B cell (primary cell): ENCODE measurements at regions of chr2 and their contacts with region 1.

Region 1: GRCh38 chr2:161063157-161063954 is 96.9 kb upstream of the TANK start:
- DNase-seq: peak; percentile 77
- ATAC-seq: peak; percentile 89
- H3K4me3 ChIP-seq: no peak overlapping the region
- H3K4me3 Mint-ChIP-seq: no peak overlapping the region
- H3K27ac ChIP-seq: no peak overlapping the region
- H3K27ac Mint-ChIP-seq: no peak overlapping the region
- H3K4me1 ChIP-seq: peaks cover 0 to 3% of the 10 kb centered on the region in 2 donors
- H3K4me1 Mint-ChIP-seq: peaks cover 4% of the 10 kb centered on the region
- H3K27me3 ChIP-seq: no peaks in the 10 kb centered on the region
- H3K27me3 Mint-ChIP-seq: no peaks in the 10 kb centered on the region
- CTCF ChIP-seq: peak; percentile 97

Region 2: GRCh38 chr2:160252278-160252887 is 811.0 kb before region 1 on chr2:
- CTCF ChIA-PET with region 1: interaction called, 7 read pairs
- POLR2A ChIA-PET with region 1: no interaction called
- intact Hi-C with region 1: loop called (anchors 2 kb)
- DNase-seq: peak; percentile 38
- ATAC-seq: no peak
- H3K4me3 ChIP-seq: no peak overlapping the region
- H3K4me3 Mint-ChIP-seq: no peak overlapping the region
- H3K27ac ChIP-seq: no peak overlapping the region
- H3K27ac Mint-ChIP-seq: no peak overlapping the region
- H3K4me1 ChIP-seq: no peaks in the 10 kb centered on the region
- H3K4me1 Mint-ChIP-seq: peaks cover 2% of the 10 kb centered on the region
- H3K27me3 ChIP-seq: no peaks in the 10 kb centered on the region
- H3K27me3 Mint-ChIP-seq: peaks cover 5% of the 10 kb centered on the region
- CTCF ChIP-seq: peak; percentile 90

Region 3: GRCh38 chr2:161077367-161078210 is 14.2 kb after region 1 on chr2:
- CTCF ChIA-PET with region 1: interaction called, 37 read pairs
- POLR2A ChIA-PET with region 1: no interaction called
- intact Hi-C with region 1: no loop called
- DNase-seq: peak; percentile 64
- ATAC-seq: peak; percentile 70
- H3K4me3 ChIP-seq: no peak overlapping the region
- H3K4me3 Mint-ChIP-seq: peak overlapping the region; percentile 48
- H3K27ac ChIP-seq: no peak overlapping the region
- H3K27ac Mint-ChIP-seq: peak overlapping the region; percentile 68
- H3K4me1 ChIP-seq: peaks cover 15 to 18% of the 10 kb centered on the region in 2 donors
- H3K4me1 Mint-ChIP-seq: peaks cover 18% of the 10 kb centered on the region
- H3K27me3 ChIP-seq: no peaks in the 10 kb centered on the region
- H3K27me3 Mint-ChIP-seq: no peaks in the 10 kb centered on the region
- CTCF ChIP-seq: no peak

Region 4: DNA sequence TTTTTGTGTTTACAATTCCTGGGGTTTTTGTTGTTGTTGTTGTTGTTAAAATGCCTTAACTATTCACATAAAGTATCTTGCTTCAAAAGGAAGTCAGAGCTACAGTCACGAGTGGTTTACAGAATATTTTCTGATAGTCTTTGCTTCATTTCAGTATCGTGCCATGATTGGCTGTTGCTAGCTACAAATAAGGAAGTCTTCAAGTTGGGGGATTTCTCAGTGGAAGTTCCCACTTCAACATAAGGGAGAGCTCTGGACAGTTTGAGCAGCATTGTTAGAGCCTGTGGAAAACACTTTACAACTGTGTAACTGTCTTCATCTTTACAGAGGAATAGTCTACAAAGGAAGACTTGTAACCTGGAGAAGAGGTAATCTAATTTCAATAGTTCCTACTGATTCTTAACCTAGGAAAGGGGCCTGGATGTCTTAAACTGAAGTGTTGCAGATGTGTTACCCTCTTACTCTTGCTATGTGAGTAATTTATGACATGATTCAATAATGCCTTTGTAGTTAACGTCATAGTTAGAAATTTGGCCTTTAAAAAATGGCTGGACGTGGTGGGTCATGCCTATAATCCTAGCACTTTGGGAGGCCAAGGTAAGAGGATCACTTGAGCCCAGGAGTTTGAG is 73.5 kb after region 1 on chr2:
- CTCF ChIA-PET with region 1: interaction called, 22 read pairs
- POLR2A ChIA-PET with region 1: no interaction called
- intact Hi-C with region 1: loop called (anchors 2 kb)
- DNase-seq: peak; percentile 93
- ATAC-seq: peak; percentile 94
- H3K4me3 ChIP-seq: peak overlapping the region; percentile 62 to 94 (median 79)
- H3K4me3 Mint-ChIP-seq: peak overlapping the region; percentile 99
- H3K27ac ChIP-seq: peak overlapping the region; percentile 97 to 100
- H3K27ac Mint-ChIP-seq: peak overlapping the region; percentile 97
- H3K4me1 ChIP-seq: peaks cover 23 to 35% of the 10 kb centered on the region in 2 donors
- H3K4me1 Mint-ChIP-seq: peaks cover 53% of the 10 kb centered on the region
- H3K27me3 ChIP-seq: no peaks in the 10 kb centered on the region
- H3K27me3 Mint-ChIP-seq: no peaks in the 10 kb centered on the region
- CTCF ChIP-seq: no peak

Region 5: DNA sequence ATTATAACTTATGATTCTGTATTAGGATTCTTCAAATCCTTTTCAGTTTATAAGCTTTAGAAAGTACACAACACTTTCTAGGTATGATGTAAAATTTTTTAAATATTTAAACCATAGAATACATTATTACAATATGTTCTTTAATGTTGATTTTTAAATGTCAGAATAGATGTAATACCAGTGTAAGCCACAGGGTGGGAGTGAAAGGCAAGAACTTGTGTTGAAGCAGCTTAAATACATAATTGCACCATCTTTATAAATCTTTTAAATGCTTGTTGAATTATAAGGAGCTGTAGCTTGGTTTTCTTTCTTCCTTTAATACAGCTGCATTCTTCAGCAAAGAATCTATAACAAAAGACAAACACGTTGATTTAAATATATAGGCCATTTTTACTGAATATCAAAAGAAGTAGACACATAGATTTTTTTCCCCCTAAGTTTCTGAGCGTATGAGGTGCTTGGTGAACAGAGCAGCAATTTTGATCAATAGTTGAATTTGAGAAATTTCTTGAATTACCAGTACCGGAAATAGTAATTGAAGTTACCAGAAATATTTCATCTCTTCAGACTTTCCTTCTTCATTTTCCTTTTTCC is 159.9 kb after region 1 on chr2:
- CTCF ChIA-PET with region 1: interaction called, 10 read pairs
- POLR2A ChIA-PET with region 1: no interaction called
- intact Hi-C with region 1: no loop called
- DNase-seq: peak; percentile 62
- ATAC-seq: peak; percentile 66
- H3K4me3 ChIP-seq: no peak overlapping the region
- H3K4me3 Mint-ChIP-seq: no peak overlapping the region
- H3K27ac ChIP-seq: no peak overlapping the region
- H3K27ac Mint-ChIP-seq: no peak overlapping the region
- H3K4me1 ChIP-seq: no peaks in the 10 kb centered on the region
- H3K4me1 Mint-ChIP-seq: no peaks in the 10 kb centered on the region
- H3K27me3 ChIP-seq: no peaks in the 10 kb centered on the region
- H3K27me3 Mint-ChIP-seq: no peaks in the 10 kb centered on the region
- CTCF ChIP-seq: peak; percentile 91

Region 6: GRCh38 chr2:162308752-162309503 is 1245.6 kb after region 1 on chr2:
- CTCF ChIA-PET with region 1: no interaction called
- POLR2A ChIA-PET with region 1: no interaction called
- intact Hi-C with region 1: no loop called
- DNase-seq: no peak
- ATAC-seq: no peak
- H3K4me3 ChIP-seq: no peak overlapping the region
- H3K4me3 Mint-ChIP-seq: no peak overlapping the region
- H3K27ac ChIP-seq: peak overlapping the region in 1 of 2 donors; percentile 6
- H3K27ac Mint-ChIP-seq: peak overlapping the region; percentile 22
- H3K4me1 ChIP-seq: no peaks in the 10 kb centered on the region
- H3K4me1 Mint-ChIP-seq: peaks cover 21% of the 10 kb centered on the region
- H3K27me3 ChIP-seq: no peaks in the 10 kb centered on the region
- H3K27me3 Mint-ChIP-seq: no peaks in the 10 kb centered on the region
- CTCF ChIP-seq: no peak

Region 7: GRCh38 chr2:162449471-162449870 is 1386.1 kb after region 1 on chr2:
- CTCF ChIA-PET with region 1: no interaction called
- POLR2A ChIA-PET with region 1: no interaction called
- intact Hi-C with region 1: no loop called
- DNase-seq: no peak
- ATAC-seq: no peak
- H3K4me3 ChIP-seq: no peak overlapping the region
- H3K4me3 Mint-ChIP-seq: no peak overlapping the region
- H3K27ac ChIP-seq: no peak overlapping the region
- H3K27ac Mint-ChIP-seq: no peak overlapping the region
- H3K4me1 ChIP-seq: no peaks in the 10 kb centered on the region
- H3K4me1 Mint-ChIP-seq: no peaks in the 10 kb centered on the region
- H3K27me3 ChIP-seq: no peaks in the 10 kb centered on the region
- H3K27me3 Mint-ChIP-seq: no peaks in the 10 kb centered on the region
- CTCF ChIP-seq: no peak